ENCODE measurements at regions of chr5 and their contacts with region 1.

Region 1: GRCh38 chr5:150138551-150139265 is 16.9 kb downstream of the PDGFRB start:
- DNase-seq: peak; percentile 77
- H3K4me3 ChIP-seq: 0 out of 2 replicates have a peak overlapping the region, but pooled peaks have one; percentile 6
- H3K27me3 ChIP-seq: no peaks in the 10 kb centered on the region
- CTCF ChIP-seq: no peak

Region 2: DNA sequence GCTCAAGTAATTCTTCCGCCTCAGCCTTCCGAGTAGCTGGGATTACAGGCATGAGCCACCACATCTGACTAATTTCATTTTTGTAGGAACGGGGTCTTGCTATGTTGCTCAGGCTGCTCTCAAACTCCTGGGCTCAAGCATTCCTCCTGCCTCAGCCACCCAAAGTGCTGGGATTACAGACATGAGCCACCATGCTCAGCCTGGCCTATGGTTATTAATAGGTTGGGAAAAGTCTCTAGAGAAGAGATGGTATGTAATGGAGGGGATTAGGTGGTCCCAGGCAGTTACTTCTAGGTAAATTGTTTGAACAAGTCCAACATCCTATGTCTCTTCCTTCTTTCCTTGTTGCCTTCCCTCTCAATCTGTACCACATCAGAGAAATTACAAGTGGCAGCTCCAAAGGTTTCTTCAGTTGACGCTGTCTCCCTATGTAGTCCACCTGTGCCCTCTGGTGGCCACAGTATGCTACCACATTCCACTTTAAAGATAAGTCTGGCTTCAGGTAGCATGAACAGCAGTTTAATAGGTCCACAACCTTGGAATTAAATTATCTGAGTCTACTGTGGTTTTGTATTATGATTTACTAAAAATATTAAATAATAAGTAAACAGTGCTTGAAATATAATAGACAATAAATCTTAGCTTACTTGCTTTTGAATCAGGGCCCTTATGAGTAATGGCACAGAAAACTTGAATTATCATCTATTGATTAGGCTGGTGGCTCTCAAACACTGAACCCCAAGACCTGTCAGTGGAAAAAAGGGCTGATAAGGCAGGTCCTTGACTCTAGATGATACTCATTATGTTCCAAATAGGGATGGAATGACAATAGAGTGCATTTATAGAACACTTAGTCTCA is 148.0 kb before region 1 on chr5:
- CTCF ChIA-PET with region 1: no interaction called
- POLR2A ChIA-PET with region 1: no interaction called
- DNase-seq: no peak
- H3K4me3 ChIP-seq: no peak overlapping the region
- H3K27me3 ChIP-seq: no peaks in the 10 kb centered on the region
- CTCF ChIP-seq: peak; percentile 92

Region 3: GRCh38 chr5:150155258-150156026 is 16.7 kb after region 1 on chr5 and contains the start of gene PDGFRB:
- CTCF ChIA-PET with region 1: interaction called, 24 read pairs
- POLR2A ChIA-PET with region 1: interaction called, 8 read pairs
- DNase-seq: peak; percentile 75
- H3K4me3 ChIP-seq: peak within 1 kb of the TSS; percentile 88
- H3K27me3 ChIP-seq: no peaks in the 10 kb centered on the region
- CTCF ChIP-seq: no peak
- polyA plus RNA-seq, gene PDGFRB: 163 and 276 TPM in 2 replicates

Measured in BJ (cell line).